Activated CD4-positive, alpha-beta T cell treated with anti-CD3 and anti-CD28 coated beads for 36 hours (primary cell): ENCODE measurements at regions of chr5 and their contacts with region 1.

Region 1: GRCh38 chr5:123089914-123090670 is 1.1 kb downstream of the PRDM6 start:
- DNase-seq: no peak
- ATAC-seq: no peak
- H3K4me3 Mint-ChIP-seq: no peak overlapping the region
- H3K27ac Mint-ChIP-seq: no peak overlapping the region
- H3K4me1 Mint-ChIP-seq: peaks cover 23% of the 10 kb centered on the region
- H3K27me3 Mint-ChIP-seq: peaks cover 70% of the 10 kb centered on the region

Region 2: DNA sequence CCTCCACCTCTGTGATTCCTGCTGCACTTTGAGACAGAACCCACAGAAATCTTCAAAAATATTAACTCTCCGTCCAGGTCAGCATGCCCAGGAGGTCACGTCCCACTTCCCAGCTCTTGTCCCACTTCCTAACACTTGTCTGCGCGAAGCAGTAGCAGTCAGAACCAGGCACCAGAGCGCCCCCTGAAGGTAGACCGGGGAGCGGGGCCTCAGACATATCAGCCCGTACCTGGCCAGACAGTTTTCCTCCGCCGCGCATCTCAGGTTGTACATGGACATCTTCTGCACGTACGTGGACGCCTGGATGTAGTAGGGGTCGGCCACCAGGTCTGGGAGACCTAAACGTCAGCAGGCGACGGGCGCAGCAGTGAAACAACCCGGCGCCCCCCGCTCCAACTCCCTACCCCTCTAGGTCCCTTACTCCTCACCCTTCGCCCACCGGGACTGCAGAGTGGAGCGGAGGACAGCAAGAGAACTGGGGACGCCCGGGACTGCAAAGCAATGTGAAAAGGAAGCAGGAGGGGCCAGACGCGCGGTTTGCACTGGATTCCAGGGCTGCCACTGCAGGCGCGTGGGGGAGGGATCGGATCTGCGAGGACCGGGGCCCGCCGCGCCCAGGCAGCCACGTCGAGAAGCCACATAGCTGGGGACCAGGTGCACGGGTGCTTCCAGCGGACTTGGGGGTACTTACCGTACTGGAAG is 1013.3 kb before region 1 on chr5:
- CTCF ChIA-PET with region 1: no interaction called
- POLR2A ChIA-PET with region 1: no interaction called
- intact Hi-C with region 1: loop called in 1 of 2 experiments (anchors 10 kb)
- DNase-seq: peak; percentile 83
- ATAC-seq: peak; percentile 80
- H3K4me3 Mint-ChIP-seq: peak overlapping the region; percentile 62
- H3K27ac Mint-ChIP-seq: no peak overlapping the region
- H3K4me1 Mint-ChIP-seq: peaks cover 17% of the 10 kb centered on the region
- H3K27me3 Mint-ChIP-seq: peaks cover 55% of the 10 kb centered on the region

Region 3: DNA sequence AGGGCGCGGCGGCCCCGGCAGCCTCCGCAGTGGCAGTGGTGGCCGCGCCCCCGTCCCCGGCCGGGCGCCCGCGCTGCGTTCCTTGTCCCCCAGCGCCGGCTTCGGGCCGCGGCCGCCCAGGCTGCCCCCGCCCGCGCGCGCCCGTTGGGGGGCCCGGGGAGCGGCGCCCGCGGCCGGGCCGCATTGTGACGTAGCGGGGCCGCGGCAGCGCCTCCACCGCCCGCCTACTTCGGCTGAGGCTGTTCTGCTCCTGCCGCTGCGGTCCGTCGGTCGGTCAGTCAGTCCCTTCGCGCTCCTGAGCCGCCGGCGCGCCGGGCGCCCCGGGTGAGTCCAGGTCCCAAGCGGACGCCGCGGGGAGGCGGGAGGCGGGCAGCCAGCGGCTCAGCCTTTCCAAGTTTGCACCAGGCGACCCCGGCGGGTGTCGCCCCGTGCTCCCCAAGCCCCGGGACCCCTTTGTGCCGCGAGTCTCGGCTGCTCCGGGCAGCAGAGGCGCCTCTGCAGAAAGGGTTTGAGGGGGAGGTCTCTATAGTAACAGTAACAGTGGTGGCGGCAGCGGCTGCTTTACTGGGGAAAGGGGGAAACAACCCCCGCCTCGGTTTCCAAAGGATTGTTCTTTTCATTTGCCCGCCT is 778.0 kb before region 1 on chr5 and contains the start of gene SNCAIP:
- CTCF ChIA-PET with region 1: no interaction called
- POLR2A ChIA-PET with region 1: no interaction called
- intact Hi-C with region 1: loop called in 1 of 2 experiments (anchors 10 kb)
- DNase-seq: peak; percentile 24
- ATAC-seq: no peak
- H3K4me3 Mint-ChIP-seq: no peak within 1 kb of the TSS
- H3K27ac Mint-ChIP-seq: no peak within 1 kb of the TSS
- H3K4me1 Mint-ChIP-seq: peaks cover 5% of the 10 kb centered on the region
- H3K27me3 Mint-ChIP-seq: peaks cover 50% of the 10 kb centered on the region
- total RNA-seq, gene SNCAIP: not detected

Region 4: GRCh38 chr5:123036391-123037103 is 53.5 kb before region 1 on chr5 and contains the start of gene PPIC:
- CTCF ChIA-PET with region 1: no interaction called
- POLR2A ChIA-PET with region 1: no interaction called
- intact Hi-C with region 1: loop called (anchors 5 kb)
- DNase-seq: peak; percentile 43
- ATAC-seq: peak; percentile 63
- H3K4me3 Mint-ChIP-seq: peak within 1 kb of the TSS; percentile 46
- H3K27ac Mint-ChIP-seq: no peak within 1 kb of the TSS
- H3K4me1 Mint-ChIP-seq: peaks cover 9% of the 10 kb centered on the region
- H3K27me3 Mint-ChIP-seq: peaks cover 53% of the 10 kb centered on the region
- total RNA-seq, gene PPIC: not detected

Region 5: DNA sequence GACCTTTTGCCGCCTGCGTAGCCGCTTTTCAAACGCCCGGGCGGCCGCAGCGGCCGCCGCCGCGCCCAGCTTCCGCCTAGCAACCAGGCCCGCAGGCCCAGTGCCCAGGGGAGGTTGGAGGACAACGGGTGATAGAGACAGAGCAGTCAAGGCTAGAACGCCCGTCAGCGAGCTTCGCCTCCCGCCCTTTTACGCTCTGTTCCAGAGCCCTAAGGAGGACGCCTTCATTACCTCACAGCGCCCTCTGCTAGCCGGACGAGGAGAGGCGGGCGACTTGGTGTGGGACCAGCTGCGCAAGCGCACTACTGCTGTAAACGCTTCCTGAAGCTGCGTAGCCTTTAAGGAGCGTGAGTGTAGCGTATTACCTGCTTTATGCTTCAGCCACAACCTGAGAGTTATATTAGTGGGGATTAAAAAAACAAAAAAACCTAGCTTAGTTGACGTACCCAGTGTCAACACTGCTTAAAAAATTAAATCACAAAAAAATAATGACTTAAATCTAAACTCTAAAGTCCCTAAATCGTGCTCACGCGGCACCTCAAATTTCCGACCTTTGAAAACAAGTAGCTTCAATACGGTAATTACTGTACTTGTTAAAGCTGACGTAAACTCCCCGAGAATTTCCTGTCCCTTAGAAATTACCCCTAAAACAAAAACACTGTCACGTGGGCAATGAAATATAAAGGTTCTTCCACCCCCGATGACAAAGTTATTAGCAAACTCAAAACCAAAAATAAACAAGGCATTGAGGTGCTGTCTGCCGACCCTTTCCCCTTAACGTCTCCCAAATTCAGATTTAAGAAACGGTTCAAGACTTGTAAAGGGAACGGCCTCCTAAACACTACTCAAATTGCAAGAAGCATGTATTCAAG is 333.4 kb after region 1 on chr5 and contains the start of gene CEP120:
- CTCF ChIA-PET with region 1: no interaction called
- POLR2A ChIA-PET with region 1: no interaction called
- intact Hi-C with region 1: no loop called
- DNase-seq: peak; percentile 98
- ATAC-seq: peak; percentile 97
- H3K4me3 Mint-ChIP-seq: no peak within 1 kb of the TSS
- H3K27ac Mint-ChIP-seq: no peak within 1 kb of the TSS
- H3K4me1 Mint-ChIP-seq: peaks cover 30% of the 10 kb centered on the region
- H3K27me3 Mint-ChIP-seq: no peaks in the 10 kb centered on the region
- total RNA-seq, gene CEP120: 29.5 to 32.5 TPM

Region 6: DNA sequence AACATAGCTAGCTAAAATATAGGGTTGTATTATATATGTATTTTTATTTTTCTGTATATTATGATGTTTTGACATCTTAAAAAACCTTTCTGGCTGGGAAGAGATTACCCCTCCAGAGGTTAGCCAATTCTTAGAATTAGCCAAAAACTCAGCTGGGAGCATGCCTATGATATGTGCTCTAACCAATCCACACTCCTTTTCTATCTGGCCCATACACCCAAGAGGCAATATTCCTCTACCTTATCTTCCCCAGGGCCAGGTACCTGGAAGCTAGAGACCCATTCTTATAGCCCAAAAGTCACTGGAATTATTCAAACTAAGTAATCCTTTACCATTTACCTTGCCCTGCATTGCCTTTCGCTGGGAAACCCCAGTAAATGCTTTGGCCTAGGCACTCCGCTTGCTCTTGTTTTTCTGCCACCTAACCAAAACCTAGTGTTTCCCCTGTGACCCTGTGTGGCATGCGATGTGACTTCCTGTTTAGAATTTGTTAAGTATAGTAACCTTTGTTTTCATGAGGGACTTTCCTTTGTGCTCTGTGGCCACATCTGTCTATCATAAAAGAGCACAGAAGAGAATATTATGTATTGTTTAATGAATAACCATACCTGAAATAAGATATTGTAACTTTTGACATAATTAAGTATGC is 459.3 kb after region 1 on chr5:
- CTCF ChIA-PET with region 1: no interaction called
- POLR2A ChIA-PET with region 1: no interaction called
- intact Hi-C with region 1: no loop called
- DNase-seq: peak; percentile 65
- ATAC-seq: peak; percentile 98
- H3K4me3 Mint-ChIP-seq: no peak overlapping the region
- H3K27ac Mint-ChIP-seq: peak overlapping the region; percentile 65
- H3K4me1 Mint-ChIP-seq: peaks cover 25% of the 10 kb centered on the region
- H3K27me3 Mint-ChIP-seq: no peaks in the 10 kb centered on the region